Caco-2 (cell line): ENCODE measurements at regions of chr3 and their contacts with region 1.

Region 1: GRCh38 chr3:197597335-197597734 is 41.6 kb upstream of the BDH1 start:
- DNase-seq: peak; percentile 69 to 79
- H3K4me3 ChIP-seq: no peak overlapping the region
- H3K4me3 Mint-ChIP-seq: peak overlapping the region; percentile 57
- H3K27ac Mint-ChIP-seq: peak overlapping the region; percentile 74
- H3K4me1 ChIP-seq: peaks cover 51% of the 10 kb centered on the region
- H3K4me1 Mint-ChIP-seq: peaks cover 37% of the 10 kb centered on the region
- H3K27me3 ChIP-seq: no peaks in the 10 kb centered on the region
- H3K27me3 Mint-ChIP-seq: no peaks in the 10 kb centered on the region
- CTCF ChIP-seq: no peak

Region 2: DNA sequence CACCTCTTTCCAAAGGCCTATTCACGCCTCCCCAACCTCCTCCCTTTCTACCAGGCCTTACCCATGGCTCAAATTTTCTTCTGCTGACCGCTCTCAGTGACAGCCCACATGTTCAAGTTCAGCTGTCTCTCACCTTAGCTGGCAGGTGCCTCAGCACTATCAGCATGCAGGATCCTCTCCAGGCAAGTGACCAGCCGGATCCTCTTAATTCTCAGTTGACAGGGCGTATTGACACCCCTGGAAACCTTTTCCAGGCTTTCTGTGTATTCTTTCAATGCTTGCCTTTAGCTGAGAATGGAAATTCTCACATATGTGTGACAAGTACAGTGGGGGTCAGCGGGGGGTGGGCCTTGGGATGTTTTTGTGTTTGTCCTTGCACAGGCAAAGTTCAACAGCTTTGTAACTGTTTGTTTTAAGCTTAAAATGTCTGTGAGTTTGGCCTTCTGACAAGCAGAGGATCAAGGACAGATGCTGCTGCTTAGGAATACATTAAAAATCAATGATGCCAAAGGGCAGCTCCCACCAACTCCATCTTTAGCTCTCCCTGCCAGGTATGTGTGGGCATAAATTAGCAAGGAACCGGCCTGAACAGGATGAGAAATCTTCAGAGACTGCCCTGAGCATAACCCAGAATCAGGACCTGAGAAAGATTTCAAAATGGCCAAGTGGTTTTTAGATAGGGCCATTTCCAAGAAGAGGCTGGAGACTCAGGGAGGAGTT is 24.1 kb before region 1 on chr3:
- CTCF ChIA-PET with region 1: interaction called, 4 read pairs
- POLR2A ChIA-PET with region 1: no interaction called
- intact Hi-C with region 1: loop called (anchors 1 kb)
- DNase-seq: no peak
- H3K4me3 ChIP-seq: no peak overlapping the region
- H3K4me3 Mint-ChIP-seq: no peak overlapping the region
- H3K27ac Mint-ChIP-seq: peak overlapping the region; percentile 51
- H3K4me1 ChIP-seq: peaks cover 59% of the 10 kb centered on the region
- H3K4me1 Mint-ChIP-seq: peaks cover 29% of the 10 kb centered on the region
- H3K27me3 ChIP-seq: no peaks in the 10 kb centered on the region
- H3K27me3 Mint-ChIP-seq: no peaks in the 10 kb centered on the region
- CTCF ChIP-seq: no peak

Region 3: GRCh38 chr3:197782230-197782629 is 184.9 kb after region 1 on chr3:
- CTCF ChIA-PET with region 1: no interaction called
- POLR2A ChIA-PET with region 1: no interaction called
- intact Hi-C with region 1: no loop called
- DNase-seq: no peak
- H3K4me3 ChIP-seq: no peak overlapping the region
- H3K4me3 Mint-ChIP-seq: no peak overlapping the region
- H3K27ac Mint-ChIP-seq: no peak overlapping the region
- H3K4me1 ChIP-seq: peaks cover 1% of the 10 kb centered on the region; the same call in 1 of the 2 replicates
- H3K4me1 Mint-ChIP-seq: peaks cover under 1% of the 10 kb centered on the region
- H3K27me3 ChIP-seq: no peaks in the 10 kb centered on the region
- H3K27me3 Mint-ChIP-seq: no peaks in the 10 kb centered on the region
- CTCF ChIP-seq: no peak